Naive thymus-derived CD4-positive, alpha-beta T cell (primary cell): ENCODE measurements at regions of chr3 and their contacts with region 1.

Region 1: DNA sequence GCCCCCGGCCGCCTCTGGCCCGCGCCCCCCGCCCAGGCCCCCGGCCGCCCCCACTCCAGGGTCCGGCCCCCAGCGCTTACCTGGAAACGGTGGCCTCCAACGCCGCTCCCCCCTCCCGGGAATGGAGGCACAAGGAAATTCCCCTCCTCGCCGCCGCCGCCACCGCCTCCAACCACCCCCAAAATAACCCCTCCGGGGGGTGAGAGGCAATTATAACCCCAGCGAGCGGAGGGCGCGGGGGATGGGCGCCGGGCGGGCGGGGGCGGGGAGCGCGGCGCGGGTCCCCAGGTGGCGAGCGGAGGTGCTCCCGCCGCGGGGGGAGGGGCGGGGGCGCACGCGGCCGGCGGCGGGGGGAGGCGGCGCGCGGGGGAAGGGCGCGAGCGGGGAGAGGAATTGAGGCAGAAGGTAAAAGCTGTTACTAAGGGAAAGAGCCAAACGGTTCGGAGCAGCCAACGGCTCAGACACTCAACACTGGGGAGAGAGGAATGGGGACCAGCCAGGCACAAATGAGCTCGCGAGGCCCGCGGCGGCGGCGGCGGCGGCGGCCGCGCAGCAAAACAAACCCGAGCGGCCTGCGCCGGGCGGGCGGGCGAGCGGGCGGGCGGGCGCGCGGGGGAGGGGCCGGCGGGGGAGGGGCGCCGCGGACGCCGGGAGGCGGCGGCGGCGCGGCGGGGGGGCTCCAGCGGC is at the start of gene TBL1XR1:
- DNase-seq: peak; percentile 78 to 93 (median 90)
- ATAC-seq: peak; percentile 81
- H3K4me3 ChIP-seq: peak within 1 kb of the TSS; percentile 91
- H3K4me3 Mint-ChIP-seq: peak within 1 kb of the TSS; percentile 93 to 99 (median 98)
- H3K27ac ChIP-seq: peak within 1 kb of the TSS; percentile 94
- H3K27ac Mint-ChIP-seq: peak within 1 kb of the TSS; percentile 94 to 100 (median 98)
- H3K4me1 ChIP-seq: peaks cover 40 to 48% of the 10 kb centered on the region in 2 donors
- H3K4me1 Mint-ChIP-seq: peaks cover 35 to 68% (median 64%) of the 10 kb centered on the region in 7 donors
- H3K27me3 ChIP-seq: no peaks in the 10 kb centered on the region
- H3K27me3 Mint-ChIP-seq: peaks cover 0 to 2% (median 0%) of the 10 kb centered on the region in 5 donors
- total RNA-seq, gene TBL1XR1: 98.9 to 173 (median 133) TPM

Region 2: DNA sequence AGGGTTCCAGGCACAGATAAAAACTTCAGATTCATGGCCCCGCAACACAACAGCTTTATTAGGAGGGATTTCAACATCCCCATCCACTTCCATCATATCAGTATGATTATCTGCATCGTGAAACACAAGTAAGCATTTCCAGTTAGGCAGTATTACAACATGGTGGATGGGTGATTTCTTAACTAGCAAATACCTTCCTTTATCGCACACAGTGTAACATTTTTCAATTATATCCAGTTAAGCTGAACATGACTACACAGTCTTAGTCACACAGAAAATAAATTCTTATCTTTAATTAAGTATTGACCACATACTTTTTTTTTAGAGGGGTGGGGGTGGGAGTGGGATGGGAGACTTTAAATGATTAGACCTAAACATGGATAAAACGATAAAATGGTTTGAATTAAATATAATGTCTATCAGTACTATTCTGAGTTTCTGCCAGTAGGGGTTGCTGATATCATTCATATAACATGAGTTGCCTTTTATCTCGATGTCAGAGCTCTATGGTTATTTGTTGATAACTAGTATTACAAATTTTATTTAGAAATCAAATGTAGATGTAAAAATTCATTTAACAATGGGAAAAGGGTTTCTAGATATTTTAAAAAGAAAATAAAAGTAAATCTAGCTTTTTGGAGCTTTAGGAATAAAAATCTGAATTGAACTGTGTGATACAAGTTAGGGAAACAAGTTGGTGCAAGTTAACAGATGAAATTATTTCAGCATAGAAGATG is 146.5 kb before region 1 on chr3:
- CTCF ChIA-PET with region 1: interaction called, 9 read pairs
- POLR2A ChIA-PET with region 1: interaction called, 30 read pairs
- intact Hi-C with region 1: loop called (anchors 1 kb)
- DNase-seq: peak in 7 of 9 donors; percentile 35 to 67 (median 52)
- ATAC-seq: peak; percentile 87
- H3K4me3 ChIP-seq: no peak overlapping the region
- H3K4me3 Mint-ChIP-seq: no peak overlapping the region
- H3K27ac ChIP-seq: no peak overlapping the region
- H3K27ac Mint-ChIP-seq: peak overlapping the region in 4 of 9 donors; percentile 17 to 56 (median 32)
- H3K4me1 ChIP-seq: peaks cover 0 to 6% of the 10 kb centered on the region in 2 donors
- H3K4me1 Mint-ChIP-seq: peaks cover 0 to 23% (median 18%) of the 10 kb centered on the region in 7 donors
- H3K27me3 ChIP-seq: no peaks in the 10 kb centered on the region
- H3K27me3 Mint-ChIP-seq: no peaks in the 10 kb centered on the region

Region 3: GRCh38 chr3:177169936-177170722 is 27.1 kb before region 1 on chr3:
- CTCF ChIA-PET with region 1: no interaction called
- POLR2A ChIA-PET with region 1: interaction called, 3 read pairs
- intact Hi-C with region 1: loop called in 1 of 2 experiments (anchors 2 kb)
- DNase-seq: no peak
- ATAC-seq: no peak
- H3K4me3 ChIP-seq: no peak overlapping the region
- H3K4me3 Mint-ChIP-seq: peak overlapping the region in 9 of 10 donors; percentile 21 to 73 (median 61)
- H3K27ac ChIP-seq: no peak overlapping the region
- H3K27ac Mint-ChIP-seq: peak overlapping the region; percentile 2 to 82 (median 44)
- H3K4me1 ChIP-seq: peaks cover 22 to 28% of the 10 kb centered on the region in 2 donors
- H3K4me1 Mint-ChIP-seq: peaks cover 48 to 88% (median 71%) of the 10 kb centered on the region in 7 donors
- H3K27me3 ChIP-seq: no peaks in the 10 kb centered on the region
- H3K27me3 Mint-ChIP-seq: no peaks in the 10 kb centered on the region

Region 4: GRCh38 chr3:177244606-177245005 is 47.4 kb after region 1 on chr3:
- CTCF ChIA-PET with region 1: no interaction called
- POLR2A ChIA-PET with region 1: interaction called, 3 read pairs
- intact Hi-C with region 1: loop called (anchors 5 kb)
- DNase-seq: no peak
- ATAC-seq: no peak
- H3K4me3 ChIP-seq: no peak overlapping the region
- H3K4me3 Mint-ChIP-seq: no peak overlapping the region
- H3K27ac ChIP-seq: no peak overlapping the region
- H3K27ac Mint-ChIP-seq: no peak overlapping the region
- H3K4me1 ChIP-seq: no peaks in the 10 kb centered on the region
- H3K4me1 Mint-ChIP-seq: peaks cover 0 to 9% (median 0%) of the 10 kb centered on the region in 7 donors
- H3K27me3 ChIP-seq: no peaks in the 10 kb centered on the region
- H3K27me3 Mint-ChIP-seq: no peaks in the 10 kb centered on the region

Region 5: GRCh38 chr3:177426878-177427495 is 229.8 kb after region 1 on chr3:
- CTCF ChIA-PET with region 1: no interaction called
- POLR2A ChIA-PET with region 1: no interaction called
- intact Hi-C with region 1: loop called in 1 of 2 experiments (anchors 2 kb)
- DNase-seq: peak in 6 of 9 donors; percentile 5 to 50 (median 19)
- ATAC-seq: peak; percentile 88
- H3K4me3 ChIP-seq: peak overlapping the region; percentile 7
- H3K4me3 Mint-ChIP-seq: peak overlapping the region; percentile 14 to 77 (median 47)
- H3K27ac ChIP-seq: no peak overlapping the region
- H3K27ac Mint-ChIP-seq: peak overlapping the region; percentile 3 to 85 (median 52)
- H3K4me1 ChIP-seq: peaks cover 7 to 17% of the 10 kb centered on the region in 2 donors
- H3K4me1 Mint-ChIP-seq: peaks cover 13 to 38% (median 23%) of the 10 kb centered on the region in 7 donors
- H3K27me3 ChIP-seq: no peaks in the 10 kb centered on the region
- H3K27me3 Mint-ChIP-seq: peaks cover 0 to 12% (median 0%) of the 10 kb centered on the region in 5 donors

Region 6: GRCh38 chr3:177679568-177680441 is 482.6 kb after region 1 on chr3:
- CTCF ChIA-PET with region 1: no interaction called
- POLR2A ChIA-PET with region 1: interaction called, 3 read pairs
- intact Hi-C with region 1: loop called in 1 of 2 experiments (anchors 10 kb)
- DNase-seq: no peak
- ATAC-seq: peak; percentile 67
- H3K4me3 ChIP-seq: no peak overlapping the region
- H3K4me3 Mint-ChIP-seq: no peak overlapping the region
- H3K27ac ChIP-seq: no peak overlapping the region
- H3K27ac Mint-ChIP-seq: peak overlapping the region in 3 of 9 donors; percentile 7 to 28 (median 27)
- H3K4me1 ChIP-seq: peaks cover 0 to 37% of the 10 kb centered on the region in 2 donors
- H3K4me1 Mint-ChIP-seq: peaks cover 0 to 38% (median 16%) of the 10 kb centered on the region in 7 donors
- H3K27me3 ChIP-seq: no peaks in the 10 kb centered on the region
- H3K27me3 Mint-ChIP-seq: no peaks in the 10 kb centered on the region

Region 7: GRCh38 chr3:178325330-178325729 is 1128.1 kb after region 1 on chr3:
- CTCF ChIA-PET with region 1: no interaction called
- POLR2A ChIA-PET with region 1: no interaction called
- intact Hi-C with region 1: loop called in 1 of 2 experiments (anchors 1 kb)
- DNase-seq: peak in 4 of 9 donors; percentile 5 to 33 (median 22)
- ATAC-seq: no peak
- H3K4me3 ChIP-seq: no peak overlapping the region
- H3K4me3 Mint-ChIP-seq: no peak overlapping the region
- H3K27ac ChIP-seq: no peak overlapping the region
- H3K27ac Mint-ChIP-seq: no peak overlapping the region
- H3K4me1 ChIP-seq: no peaks in the 10 kb centered on the region
- H3K4me1 Mint-ChIP-seq: no peaks in the 10 kb centered on the region
- H3K27me3 ChIP-seq: no peaks in the 10 kb centered on the region
- H3K27me3 Mint-ChIP-seq: no peaks in the 10 kb centered on the region